ENCODE measurements at regions of chr13 and their contacts with region 1.

Region 1: DNA sequence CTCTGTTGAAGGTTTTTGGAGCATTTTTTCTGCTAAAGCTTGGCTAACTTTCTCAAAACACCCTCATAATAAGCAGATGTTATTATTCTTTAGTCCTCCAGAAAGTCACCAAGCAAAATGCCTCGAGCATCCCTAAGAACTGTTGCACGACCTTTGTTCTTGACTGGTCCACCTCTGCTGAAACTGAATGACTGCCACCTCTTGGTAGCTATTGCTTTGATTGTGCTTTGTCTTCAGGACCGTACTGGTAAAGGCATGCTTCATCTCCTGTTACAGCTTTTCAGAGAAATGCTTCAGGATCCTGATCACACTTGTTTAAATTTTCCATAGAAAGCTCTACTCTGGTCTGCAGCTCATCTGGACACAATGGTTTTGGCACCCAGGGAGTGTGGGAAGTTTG is 254.8 kb downstream of the DCT start:
- DNase-seq: peak in 1 of 2 experiments; percentile 5
- H3K4me3 ChIP-seq: no peak overlapping the region
- H3K4me3 Mint-ChIP-seq: no peak overlapping the region
- H3K27ac Mint-ChIP-seq: no peak overlapping the region
- H3K4me1 ChIP-seq: no peaks in the 10 kb centered on the region
- H3K4me1 Mint-ChIP-seq: no peaks in the 10 kb centered on the region
- H3K27me3 ChIP-seq: no peaks in the 10 kb centered on the region; the same call in 1 of the 2 replicates
- H3K27me3 Mint-ChIP-seq: no peaks in the 10 kb centered on the region
- CTCF ChIP-seq: no peak

Region 2: GRCh38 chr13:92716749-92717148 is 1507.9 kb before region 1 on chr13:
- CTCF ChIA-PET with region 1: no interaction called
- POLR2A ChIA-PET with region 1: no interaction called
- intact Hi-C with region 1: loop called (anchors 5 kb)
- DNase-seq: no peak
- H3K4me3 ChIP-seq: no peak overlapping the region
- H3K4me3 Mint-ChIP-seq: no peak overlapping the region
- H3K27ac Mint-ChIP-seq: no peak overlapping the region
- H3K4me1 ChIP-seq: no peaks in the 10 kb centered on the region; the same call in 1 of the 2 replicates
- H3K4me1 Mint-ChIP-seq: no peaks in the 10 kb centered on the region
- H3K27me3 ChIP-seq: no peaks in the 10 kb centered on the region
- H3K27me3 Mint-ChIP-seq: no peaks in the 10 kb centered on the region
- CTCF ChIP-seq: peak in 1 of 2 experiments; percentile 13

Region 3: GRCh38 chr13:94173312-94173854 is 51.3 kb before region 1 on chr13:
- CTCF ChIA-PET with region 1: no interaction called
- POLR2A ChIA-PET with region 1: no interaction called
- intact Hi-C with region 1: loop called (anchors 1 kb)
- DNase-seq: no peak
- H3K4me3 ChIP-seq: no peak overlapping the region
- H3K4me3 Mint-ChIP-seq: no peak overlapping the region
- H3K27ac Mint-ChIP-seq: no peak overlapping the region
- H3K4me1 ChIP-seq: no peaks in the 10 kb centered on the region
- H3K4me1 Mint-ChIP-seq: no peaks in the 10 kb centered on the region
- H3K27me3 ChIP-seq: no peaks in the 10 kb centered on the region
- H3K27me3 Mint-ChIP-seq: peaks cover 3% of the 10 kb centered on the region
- CTCF ChIP-seq: no peak

Measured in Caco-2 (cell line).